Adrenal gland (tissue), 19 donors: ENCODE measurements at regions of chr1 and their contacts with region 1.

Region 1: DNA sequence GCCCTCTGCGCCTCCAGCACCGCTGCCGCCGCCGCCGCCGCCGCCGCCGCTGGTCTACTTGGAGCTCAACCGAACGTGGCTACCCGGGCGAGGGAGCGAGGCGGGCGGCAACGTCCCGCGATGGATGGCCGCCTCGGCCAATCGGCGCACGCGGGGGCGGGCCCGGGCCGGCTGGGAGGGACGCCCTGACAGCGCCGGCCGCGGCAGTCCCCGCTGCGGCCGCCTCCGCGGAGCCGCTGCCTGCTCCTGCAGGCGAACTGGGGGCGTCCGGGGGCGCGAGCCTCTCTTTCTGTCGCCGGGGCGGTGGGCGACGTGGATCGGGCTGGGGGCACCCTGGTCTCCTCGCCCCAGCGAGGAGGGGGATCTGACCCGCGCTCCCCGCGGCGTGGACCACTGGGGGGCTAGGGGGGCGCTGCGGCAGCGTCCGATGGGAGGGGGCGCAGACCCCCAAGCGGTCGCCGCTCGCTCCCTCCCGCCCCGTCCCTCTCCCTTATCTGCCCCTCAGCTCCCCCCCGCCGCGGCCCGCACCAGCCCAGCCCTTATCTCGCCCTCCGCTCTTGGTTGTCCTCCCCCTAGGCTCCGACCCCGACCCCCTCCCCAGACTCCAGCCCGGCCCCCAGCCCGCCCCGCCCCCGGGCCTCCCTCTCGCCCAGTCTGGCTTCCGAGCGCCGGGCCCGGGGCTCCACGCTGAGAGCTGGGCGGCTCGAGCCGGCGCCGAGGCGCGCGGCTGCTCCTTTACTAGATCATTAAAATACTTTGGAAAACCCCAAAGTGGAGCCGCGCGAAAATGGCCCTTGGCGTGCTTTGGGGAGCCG is at the start of gene SSBP3:
- DNase-seq: peak; percentile 90 to 94 (median 92)
- H3K4me3 ChIP-seq: peak within 1 kb of the TSS in 3 of 4 donors; percentile 40 to 91 (median 83)
- H3K27ac ChIP-seq: peak within 1 kb of the TSS; percentile 83 to 96 (median 92)
- H3K4me1 ChIP-seq: peaks cover 17 to 43% of the 10 kb centered on the region in 2 donors
- H3K27me3 ChIP-seq: no peaks in the 10 kb centered on the region
- CTCF ChIP-seq: peak in 2 of 6 experiments; percentile 30 to 41
- POLR2A ChIP-seq: peak; percentile 86 to 97
- total RNA-seq, gene SSBP3: 15.3 to 91.5 (median 49.7) TPM

Region 2: GRCh38 chr1:54273092-54273794 is 133.3 kb before region 1 on chr1:
- intact Hi-C with region 1: loop called (anchors 10 kb)
- DNase-seq: peak; percentile 89 to 98 (median 95)
- H3K4me3 ChIP-seq: no peak overlapping the region
- H3K27ac ChIP-seq: peak overlapping the region; percentile 90 to 99 (median 96)
- H3K4me1 ChIP-seq: peaks cover 53 to 70% of the 10 kb centered on the region in 2 donors
- H3K27me3 ChIP-seq: no peaks in the 10 kb centered on the region
- CTCF ChIP-seq: peak in 4 of 6 experiments; percentile 4 to 75 (median 70)
- POLR2A ChIP-seq: peak in 1 of 2 donors; percentile 56

Region 3: DNA sequence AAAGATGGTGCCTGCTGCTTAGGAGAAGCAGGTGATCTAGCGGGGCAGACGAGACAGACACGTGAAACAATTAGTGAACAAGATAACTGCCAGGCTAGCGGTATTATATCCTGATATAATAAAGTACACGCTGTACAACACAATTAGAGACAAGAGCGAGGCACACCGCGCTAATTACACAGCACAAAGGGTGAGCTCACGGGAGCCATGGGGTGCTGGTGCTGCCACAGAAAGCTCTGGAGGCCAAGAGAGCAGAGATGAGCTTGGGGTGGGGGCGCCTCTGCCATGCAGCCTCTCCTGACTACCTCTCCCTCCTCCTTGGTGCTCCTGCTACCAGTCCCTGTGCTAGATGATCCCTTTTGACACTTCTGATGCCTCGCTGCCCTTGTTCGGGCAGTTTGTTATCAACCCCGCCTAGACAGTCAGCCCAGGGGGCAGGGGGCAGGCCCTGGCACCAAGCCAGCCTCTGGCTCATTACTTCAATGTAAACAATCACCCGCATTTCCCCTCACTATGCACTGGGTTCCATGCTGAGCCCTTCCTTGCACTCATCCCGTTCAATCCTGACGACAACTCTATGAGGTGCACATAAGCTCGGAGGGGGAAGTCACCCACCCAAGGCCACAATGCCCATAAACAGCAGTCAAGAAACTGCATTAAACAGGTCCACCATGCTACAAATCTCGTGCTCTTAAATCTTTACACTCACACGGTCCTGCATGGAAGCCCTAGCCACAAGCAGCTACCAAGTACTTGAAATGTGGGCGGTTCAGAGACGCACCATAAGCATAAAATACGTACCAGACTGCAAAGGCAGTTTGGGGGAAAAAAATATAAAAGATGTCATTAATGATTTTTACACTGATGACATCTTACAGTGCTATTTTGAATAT is 103.3 kb before region 1 on chr1:
- intact Hi-C with region 1: no loop called
- DNase-seq: peak in 1 of 7 donors; percentile 87
- H3K4me3 ChIP-seq: no peak overlapping the region
- H3K27ac ChIP-seq: peak overlapping the region in 1 of 5 donors; percentile 64
- H3K4me1 ChIP-seq: peaks cover 4 to 21% of the 10 kb centered on the region in 2 donors
- H3K27me3 ChIP-seq: no peaks in the 10 kb centered on the region
- CTCF ChIP-seq: no peak
- POLR2A ChIP-seq: no peak